ENCODE measurements at regions of chr4 and their contacts with region 1.

Region 1: DNA sequence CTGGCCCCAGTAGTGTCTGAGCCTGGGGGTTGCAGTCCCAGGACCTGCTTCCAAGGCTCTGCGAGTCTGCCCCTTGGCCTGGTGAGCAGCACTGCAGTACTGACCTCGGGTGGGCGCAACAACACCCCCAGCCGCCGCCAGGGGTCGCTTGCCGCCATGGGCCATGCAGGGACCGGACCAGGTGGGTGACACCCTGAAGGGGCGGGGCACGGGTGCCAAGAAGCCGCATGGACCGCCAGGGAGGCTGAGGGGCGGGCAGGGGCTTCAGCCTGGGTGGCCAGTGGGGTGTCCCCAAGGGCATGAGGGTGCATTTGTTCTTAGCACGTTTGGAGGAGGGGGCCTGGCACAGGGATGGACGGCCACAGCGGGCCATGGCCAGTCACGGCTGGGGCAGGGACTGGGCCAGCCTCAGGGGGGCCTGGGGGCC is 25.0 kb downstream of the TACC3 start:
- DNase-seq: no peak
- H3K4me3 ChIP-seq: no peak overlapping the region
- H3K27me3 ChIP-seq: no peaks in the 10 kb centered on the region
- CTCF ChIP-seq: peak; percentile 94

Region 2: GRCh38 chr4:1726146-1726934 is 19.9 kb before region 1 on chr4:
- CTCF ChIA-PET with region 1: interaction called, 15 read pairs
- POLR2A ChIA-PET with region 1: no interaction called
- DNase-seq: no peak
- H3K4me3 ChIP-seq: no peak overlapping the region
- H3K27me3 ChIP-seq: no peaks in the 10 kb centered on the region
- CTCF ChIP-seq: peak; percentile 98

Region 3: GRCh38 chr4:1763550-1764080 is 17.3 kb after region 1 on chr4:
- CTCF ChIA-PET with region 1: interaction called, 11 read pairs
- POLR2A ChIA-PET with region 1: no interaction called
- DNase-seq: no peak
- H3K4me3 ChIP-seq: peak overlapping the region; percentile 9; the same call in 1 of the 2 replicates
- H3K27me3 ChIP-seq: no peaks in the 10 kb centered on the region; the same call in 1 of the 2 replicates
- CTCF ChIP-seq: no peak

Region 4: GRCh38 chr4:1910643-1911042 is 164.4 kb after region 1 on chr4:
- CTCF ChIA-PET with region 1: interaction called, 64 read pairs
- POLR2A ChIA-PET with region 1: no interaction called
- DNase-seq: no peak
- H3K4me3 ChIP-seq: no peak overlapping the region
- H3K27me3 ChIP-seq: no peaks in the 10 kb centered on the region
- CTCF ChIP-seq: peak; percentile 78

Measured in BJ (cell line).